Endothelial cell of umbilical vein (primary cell): ENCODE measurements at regions of chr4 and their contacts with region 1.

Region 1: GRCh38 chr4:76179398-76180318 is 31.5 kb upstream of the NUP54 start:
- DNase-seq: peak; percentile 78
- H3K4me3 ChIP-seq: no peak overlapping the region
- H3K27ac ChIP-seq: no peak overlapping the region
- H3K4me1 ChIP-seq: peaks cover 4% of the 10 kb centered on the region
- H3K27me3 ChIP-seq: no peaks in the 10 kb centered on the region
- CTCF ChIP-seq: peak; percentile 85 to 86
- POLR2A ChIP-seq: no peak

Region 2: DNA sequence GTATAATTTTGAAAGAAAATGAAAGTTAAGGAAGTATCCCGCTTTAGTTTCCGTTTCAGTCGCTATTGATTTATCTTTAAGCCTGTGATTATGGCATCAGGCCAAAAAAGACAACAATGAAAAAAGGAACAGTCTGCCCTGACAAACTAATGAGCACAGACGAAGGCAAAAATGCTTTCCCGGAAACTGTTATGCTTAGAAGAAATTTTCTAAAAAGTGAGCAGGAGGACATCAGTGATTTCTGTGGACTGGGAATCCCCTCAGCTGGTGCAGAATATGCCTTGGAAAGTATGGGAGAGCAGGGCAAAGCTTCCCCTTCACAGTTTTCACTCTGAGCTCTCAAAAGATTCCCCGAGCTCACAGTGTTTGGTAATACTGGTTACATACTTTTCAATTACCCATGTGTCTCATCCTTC is 151.3 kb before region 1 on chr4:
- CTCF ChIA-PET with region 1: no interaction called
- POLR2A ChIA-PET with region 1: no interaction called
- dilution Hi-C with region 1: no loop called
- intact Hi-C with region 1: no loop called
- DNase-seq: peak; percentile 72
- H3K4me3 ChIP-seq: peak overlapping the region; percentile 16 to 62 (median 36)
- H3K27ac ChIP-seq: peak overlapping the region; percentile 7
- H3K4me1 ChIP-seq: peaks cover 10% of the 10 kb centered on the region
- H3K27me3 ChIP-seq: peaks cover 4% of the 10 kb centered on the region in 2 experiments
- CTCF ChIP-seq: no peak
- POLR2A ChIP-seq: no peak

Region 3: GRCh38 chr4:76198411-76199237 is 19.0 kb after region 1 on chr4:
- CTCF ChIA-PET with region 1: interaction called, 42 read pairs
- POLR2A ChIA-PET with region 1: no interaction called
- dilution Hi-C with region 1: no loop called
- intact Hi-C with region 1: loop called (anchors 1 kb)
- DNase-seq: peak; percentile 95
- H3K4me3 ChIP-seq: no peak overlapping the region
- H3K27ac ChIP-seq: peak overlapping the region; percentile 71
- H3K4me1 ChIP-seq: peaks cover 33% of the 10 kb centered on the region
- H3K27me3 ChIP-seq: no peaks in the 10 kb centered on the region
- CTCF ChIP-seq: no peak
- POLR2A ChIP-seq: no peak

Region 4: DNA sequence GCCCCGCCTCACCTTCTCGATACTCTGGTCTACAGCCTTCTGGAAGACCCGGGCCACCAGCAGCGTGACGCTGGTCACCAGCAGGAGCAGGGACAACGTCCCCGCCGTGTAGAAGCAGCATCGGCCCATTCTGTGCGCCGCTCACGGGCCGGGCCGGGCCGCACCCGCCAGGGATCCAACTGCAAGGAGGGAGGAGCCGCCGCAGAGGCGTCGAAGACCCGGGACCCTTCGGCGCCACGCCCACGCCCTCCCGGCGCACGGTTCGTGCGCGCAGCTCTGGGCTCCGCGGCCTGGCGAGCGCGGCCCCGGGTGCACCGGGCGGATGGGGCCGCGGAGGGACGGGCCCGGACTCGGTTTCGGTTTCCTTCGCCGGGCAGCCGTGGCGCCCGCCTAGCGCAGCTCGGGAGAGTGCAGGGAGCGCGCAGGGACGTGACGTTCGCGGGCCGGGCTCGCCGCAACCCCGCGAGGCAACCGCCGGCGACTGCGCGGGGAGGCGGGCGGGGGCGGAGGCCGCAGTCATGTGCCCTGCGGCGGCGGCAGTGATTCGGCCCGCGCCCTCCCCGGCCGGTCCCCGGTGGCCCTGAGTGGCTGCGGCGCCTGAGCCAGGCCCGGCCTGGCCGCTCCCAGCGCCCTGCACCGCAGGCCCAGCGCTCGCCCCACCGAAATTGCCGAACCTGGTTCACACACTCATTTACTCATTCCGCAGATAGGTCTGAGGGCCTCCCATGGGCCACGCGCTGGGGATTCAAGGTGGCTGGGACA is 33.9 kb after region 1 on chr4 and contains the start of gene SCARB2:
- CTCF ChIA-PET with region 1: interaction called, 89 read pairs
- POLR2A ChIA-PET with region 1: no interaction called
- dilution Hi-C with region 1: no loop called
- intact Hi-C with region 1: loop called (anchors 1 kb)
- DNase-seq: peak; percentile 90
- H3K4me3 ChIP-seq: peak within 1 kb of the TSS; percentile 37 to 94 (median 85)
- H3K27ac ChIP-seq: peak within 1 kb of the TSS; percentile 57
- H3K4me1 ChIP-seq: peaks cover 36% of the 10 kb centered on the region
- H3K27me3 ChIP-seq: no peaks in the 10 kb centered on the region
- CTCF ChIP-seq: no peak
- POLR2A ChIP-seq: peak; percentile 93
- total RNA-seq, gene SCARB2: 116 and 122 TPM in 2 replicates

Region 5: GRCh38 chr4:76266627-76267026 is 87.0 kb after region 1 on chr4:
- CTCF ChIA-PET with region 1: interaction called, 10 read pairs
- POLR2A ChIA-PET with region 1: no interaction called
- dilution Hi-C with region 1: no loop called
- intact Hi-C with region 1: no loop called
- DNase-seq: no peak
- H3K4me3 ChIP-seq: no peak overlapping the region
- H3K27ac ChIP-seq: no peak overlapping the region
- H3K4me1 ChIP-seq: no peaks in the 10 kb centered on the region
- H3K27me3 ChIP-seq: peaks cover 16 to 24% of the 10 kb centered on the region in 2 experiments
- CTCF ChIP-seq: no peak
- POLR2A ChIP-seq: no peak

Region 6: DNA sequence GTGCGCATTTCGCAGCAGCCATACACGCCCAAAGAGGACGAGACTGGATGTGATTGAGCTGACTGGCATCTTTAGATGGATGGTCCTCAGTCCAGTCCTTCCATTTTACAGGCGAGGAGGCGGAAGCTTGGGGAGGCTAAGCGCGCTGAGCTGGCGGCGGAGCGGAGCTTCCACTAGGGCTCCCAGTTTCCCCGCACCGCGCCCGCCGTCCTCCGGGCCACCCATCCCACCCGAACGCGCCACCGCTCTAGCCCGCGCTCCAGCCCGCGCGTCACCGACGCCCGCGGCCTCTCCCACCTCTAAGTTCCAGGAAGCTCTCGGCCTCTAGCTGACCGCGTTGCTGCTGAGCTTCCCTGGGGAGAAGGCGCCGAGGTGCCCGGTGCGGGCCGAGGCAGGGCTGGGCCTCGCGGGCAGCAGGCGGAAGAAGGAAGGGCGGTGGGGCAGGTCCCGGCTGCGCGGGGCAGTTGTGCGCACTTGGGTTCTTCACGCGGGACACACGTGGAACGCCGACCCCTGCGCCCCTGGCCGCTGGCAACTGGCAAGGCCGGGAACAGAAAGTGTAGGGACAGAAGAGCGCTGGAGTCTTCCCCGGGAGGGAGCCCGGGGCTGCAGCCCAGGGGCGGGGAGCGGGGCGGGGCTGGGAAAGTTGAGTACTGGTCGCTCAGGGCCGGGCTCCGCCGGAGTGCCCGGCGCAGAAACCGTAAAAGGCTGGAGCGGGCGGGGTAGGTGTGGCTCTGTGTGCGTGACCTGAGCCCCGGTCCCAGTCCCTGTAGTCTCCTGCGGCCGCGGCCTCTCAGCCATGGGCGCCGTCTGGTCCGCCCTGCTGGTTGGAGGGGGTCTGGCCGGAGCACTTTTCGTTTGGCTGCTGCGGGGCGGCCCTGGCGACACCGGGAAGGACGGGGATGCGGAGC is 126.6 kb after region 1 on chr4 and contains the start of gene STBD1:
- CTCF ChIA-PET with region 1: interaction called, 34 read pairs
- POLR2A ChIA-PET with region 1: no interaction called
- dilution Hi-C with region 1: no loop called
- intact Hi-C with region 1: loop called (anchors 1 kb)
- DNase-seq: peak; percentile 57
- H3K4me3 ChIP-seq: peak within 1 kb of the TSS; percentile 33 to 75 (median 66)
- H3K27ac ChIP-seq: no peak within 1 kb of the TSS
- H3K4me1 ChIP-seq: peaks cover 6% of the 10 kb centered on the region
- H3K27me3 ChIP-seq: no peaks in the 10 kb centered on the region
- CTCF ChIP-seq: peak in 1 of 2 donors; percentile 12
- POLR2A ChIP-seq: no peak
- total RNA-seq, gene STBD1: 0.18 and 0.25 TPM in 2 replicates

Region 7: DNA sequence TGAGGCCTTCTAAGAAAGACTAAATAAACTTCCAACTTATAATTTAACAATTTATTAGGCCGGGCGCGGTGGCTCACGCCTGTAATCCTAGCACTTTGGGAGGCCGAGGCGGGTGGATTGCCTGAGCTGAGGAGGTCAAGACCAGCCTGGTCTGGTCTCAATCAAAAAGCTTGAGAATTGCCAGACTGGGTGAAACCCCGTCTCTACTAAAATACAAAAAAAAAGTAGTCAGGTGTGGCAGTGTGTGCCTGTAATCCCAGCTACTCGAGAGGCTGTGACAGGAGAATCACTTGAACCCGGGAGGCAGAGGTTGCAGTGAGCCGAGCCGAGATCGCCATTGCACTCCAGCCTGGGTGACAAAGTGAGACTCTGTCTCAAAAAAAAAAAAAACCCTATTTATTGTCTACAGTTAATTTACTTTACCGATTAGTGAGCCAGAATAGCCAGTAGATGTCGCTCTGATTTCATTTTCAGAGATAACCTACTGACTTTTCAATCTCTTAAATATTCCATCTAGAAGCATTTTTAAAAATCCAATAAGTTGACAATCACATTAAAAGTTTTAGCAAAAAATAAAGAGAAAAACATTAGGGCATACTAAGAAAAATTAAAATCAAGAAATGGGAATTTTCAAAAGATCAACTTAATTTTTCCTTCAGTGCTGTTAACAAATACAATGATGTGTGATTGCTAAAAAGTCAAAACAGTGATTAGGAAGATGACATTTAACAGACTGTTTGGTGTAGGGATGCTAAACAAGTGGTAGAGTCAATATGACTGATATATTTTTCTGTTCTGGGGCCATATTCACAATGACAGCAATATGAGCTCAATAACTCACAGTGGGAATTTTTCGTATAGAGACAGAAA is 251.1 kb after region 1 on chr4:
- CTCF ChIA-PET with region 1: interaction called, 12 read pairs
- POLR2A ChIA-PET with region 1: no interaction called
- dilution Hi-C with region 1: no loop called
- intact Hi-C with region 1: loop called (anchors 5 kb)
- DNase-seq: peak; percentile 61
- H3K4me3 ChIP-seq: no peak overlapping the region
- H3K27ac ChIP-seq: no peak overlapping the region
- H3K4me1 ChIP-seq: no peaks in the 10 kb centered on the region
- H3K27me3 ChIP-seq: peaks cover 14 to 26% of the 10 kb centered on the region in 2 experiments
- CTCF ChIP-seq: peak; percentile 39
- POLR2A ChIP-seq: no peak

Region 8: GRCh38 chr4:76504613-76505465 is 325.2 kb after region 1 on chr4:
- CTCF ChIA-PET with region 1: interaction called, 35 read pairs
- POLR2A ChIA-PET with region 1: no interaction called
- dilution Hi-C with region 1: no loop called
- intact Hi-C with region 1: loop called (anchors 2 kb)
- DNase-seq: peak; percentile 61
- H3K4me3 ChIP-seq: no peak overlapping the region
- H3K27ac ChIP-seq: no peak overlapping the region
- H3K4me1 ChIP-seq: no peaks in the 10 kb centered on the region
- H3K27me3 ChIP-seq: peaks cover 12 to 14% of the 10 kb centered on the region in 2 experiments
- CTCF ChIP-seq: peak; percentile 42 to 46
- POLR2A ChIP-seq: no peak

Region 9: DNA sequence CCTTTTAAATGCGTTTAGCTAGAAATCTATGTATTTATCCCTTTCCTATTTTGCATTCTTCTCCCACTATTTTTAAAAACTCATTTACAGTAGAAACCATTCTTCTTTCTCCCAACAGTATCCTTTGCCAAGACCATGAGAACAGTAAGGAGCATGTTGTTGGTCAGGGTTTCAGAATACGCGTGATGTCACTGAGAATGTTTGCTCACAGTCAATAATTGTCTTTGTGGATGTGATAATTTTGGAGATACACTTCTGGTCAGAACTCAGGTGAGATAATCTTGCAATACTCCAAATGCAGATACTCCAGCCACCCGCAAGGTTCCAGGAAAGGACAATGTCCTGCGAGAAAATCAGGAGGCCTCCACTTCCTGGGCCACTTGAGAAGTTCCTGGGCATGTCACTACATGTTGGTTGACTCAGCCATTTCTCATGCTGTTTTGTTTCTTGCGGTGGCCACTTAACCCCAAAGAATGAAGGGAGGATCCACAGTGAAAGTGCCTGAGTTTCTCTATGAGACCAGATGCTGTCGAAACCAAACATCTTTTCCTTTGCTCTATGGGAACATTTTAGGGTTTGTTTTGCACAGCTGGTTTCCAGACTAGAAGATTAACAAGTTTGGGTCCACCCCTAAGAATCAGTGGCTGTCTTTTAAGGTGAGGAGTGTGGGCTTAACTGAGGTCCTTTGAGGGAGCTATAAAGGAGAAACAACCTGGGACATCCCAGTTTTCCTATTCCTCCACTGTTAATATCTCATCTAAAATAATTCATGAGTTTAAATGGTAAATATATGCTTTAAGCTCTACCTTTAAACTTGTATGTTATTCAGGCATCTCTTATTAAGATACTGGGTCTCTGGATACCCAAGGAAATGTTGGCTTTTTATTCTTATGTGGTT is 602.3 kb after region 1 on chr4:
- CTCF ChIA-PET with region 1: no interaction called
- POLR2A ChIA-PET with region 1: no interaction called
- dilution Hi-C with region 1: no loop called
- intact Hi-C with region 1: no loop called
- DNase-seq: no peak
- H3K4me3 ChIP-seq: no peak overlapping the region
- H3K27ac ChIP-seq: no peak overlapping the region
- H3K4me1 ChIP-seq: peaks cover 3% of the 10 kb centered on the region
- H3K27me3 ChIP-seq: no peaks in the 10 kb centered on the region
- CTCF ChIP-seq: no peak
- POLR2A ChIP-seq: no peak